Activated B cell treated with CpG ODN at 0.5 μM for 24 hours (primary cell): ENCODE measurements at regions of chrX and their contacts with region 1.

Region 1: DNA sequence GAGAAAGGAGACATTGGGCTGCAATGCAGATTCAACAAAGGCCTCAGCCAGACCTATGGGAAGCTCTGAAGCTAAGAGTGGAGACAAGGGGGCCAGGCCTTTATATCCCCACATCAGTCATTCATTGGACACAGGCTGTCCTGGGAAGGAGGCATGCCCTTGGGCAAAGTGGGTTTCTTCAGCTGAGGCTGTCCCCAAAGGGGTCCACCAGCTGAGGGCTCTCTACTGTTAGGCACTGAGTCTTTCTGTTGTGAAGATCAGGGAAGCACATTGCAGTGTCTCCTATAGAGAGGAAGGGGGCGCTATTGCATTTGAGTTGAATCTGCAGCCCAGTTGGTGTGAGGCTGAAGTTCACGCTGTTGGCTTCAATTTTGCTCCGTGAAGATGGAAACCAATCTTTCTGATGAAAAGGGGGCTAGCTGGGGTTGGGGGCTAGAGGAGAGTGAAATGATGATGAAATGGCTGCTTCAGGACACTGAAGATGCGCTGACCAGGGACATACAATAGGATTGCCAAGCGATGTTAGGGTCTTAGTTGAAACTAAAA is 48.0 kb downstream of the SLC25A5 start:
- DNase-seq: peak; percentile 18
- ATAC-seq: peak; percentile 96
- H3K4me3 Mint-ChIP-seq: no peak overlapping the region
- H3K27ac Mint-ChIP-seq: peak overlapping the region; percentile 26
- H3K4me1 Mint-ChIP-seq: peaks cover 4% of the 10 kb centered on the region
- H3K27me3 Mint-ChIP-seq: no peaks in the 10 kb centered on the region
- CTCF ChIP-seq: no peak

Region 2: DNA sequence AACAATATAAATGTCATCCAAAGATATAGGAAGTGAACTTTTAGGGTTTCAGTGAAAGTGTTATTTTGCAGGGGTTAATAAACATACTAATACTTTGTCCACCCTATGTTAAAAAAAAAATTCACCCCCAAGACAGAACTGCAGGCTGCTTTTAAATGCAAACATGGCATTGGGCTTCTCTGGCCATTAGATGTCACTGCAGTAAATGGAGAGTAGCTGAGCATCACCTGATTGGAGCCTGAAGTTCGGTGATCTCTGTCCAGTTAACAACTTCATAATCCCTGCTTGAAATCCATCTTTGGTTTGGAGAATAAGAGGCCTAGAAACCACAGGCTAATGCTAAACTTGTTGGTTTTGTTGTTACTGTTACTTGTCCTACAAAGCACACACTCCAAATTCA is 98.4 kb before region 1 on chrX:
- CTCF ChIA-PET with region 1: no interaction called
- POLR2A ChIA-PET with region 1: no interaction called
- intact Hi-C with region 1: loop called (anchors 1 kb)
- DNase-seq: no peak
- ATAC-seq: no peak
- H3K4me3 Mint-ChIP-seq: no peak overlapping the region
- H3K27ac Mint-ChIP-seq: no peak overlapping the region
- H3K4me1 Mint-ChIP-seq: no peaks in the 10 kb centered on the region
- H3K27me3 Mint-ChIP-seq: no peaks in the 10 kb centered on the region
- CTCF ChIP-seq: no peak

Region 3: GRCh38 chrX:119549327-119550016 is 33.2 kb after region 1 on chrX:
- CTCF ChIA-PET with region 1: no interaction called
- POLR2A ChIA-PET with region 1: no interaction called
- intact Hi-C with region 1: no loop called
- DNase-seq: no peak
- ATAC-seq: peak; percentile 77
- H3K4me3 Mint-ChIP-seq: peak overlapping the region; percentile 69
- H3K27ac Mint-ChIP-seq: peak overlapping the region; percentile 88
- H3K4me1 Mint-ChIP-seq: peaks cover 34% of the 10 kb centered on the region
- H3K27me3 Mint-ChIP-seq: no peaks in the 10 kb centered on the region
- CTCF ChIP-seq: no peak

Region 4: GRCh38 chrX:119574394-119575266 is 58.4 kb after region 1 on chrX and contains the start of gene UBE2A:
- CTCF ChIA-PET with region 1: interaction called, 6 read pairs
- POLR2A ChIA-PET with region 1: interaction called, 5 read pairs
- intact Hi-C with region 1: loop called (anchors 1 kb)
- DNase-seq: peak; percentile 78
- ATAC-seq: peak; percentile 94
- H3K4me3 Mint-ChIP-seq: peak within 1 kb of the TSS; percentile 93
- H3K27ac Mint-ChIP-seq: peak within 1 kb of the TSS; percentile 91
- H3K4me1 Mint-ChIP-seq: peaks cover 38% of the 10 kb centered on the region
- H3K27me3 Mint-ChIP-seq: no peaks in the 10 kb centered on the region
- CTCF ChIP-seq: no peak
- total RNA-seq, gene UBE2A: 65.9 and 73.5 TPM in 2 replicates

Region 5: DNA sequence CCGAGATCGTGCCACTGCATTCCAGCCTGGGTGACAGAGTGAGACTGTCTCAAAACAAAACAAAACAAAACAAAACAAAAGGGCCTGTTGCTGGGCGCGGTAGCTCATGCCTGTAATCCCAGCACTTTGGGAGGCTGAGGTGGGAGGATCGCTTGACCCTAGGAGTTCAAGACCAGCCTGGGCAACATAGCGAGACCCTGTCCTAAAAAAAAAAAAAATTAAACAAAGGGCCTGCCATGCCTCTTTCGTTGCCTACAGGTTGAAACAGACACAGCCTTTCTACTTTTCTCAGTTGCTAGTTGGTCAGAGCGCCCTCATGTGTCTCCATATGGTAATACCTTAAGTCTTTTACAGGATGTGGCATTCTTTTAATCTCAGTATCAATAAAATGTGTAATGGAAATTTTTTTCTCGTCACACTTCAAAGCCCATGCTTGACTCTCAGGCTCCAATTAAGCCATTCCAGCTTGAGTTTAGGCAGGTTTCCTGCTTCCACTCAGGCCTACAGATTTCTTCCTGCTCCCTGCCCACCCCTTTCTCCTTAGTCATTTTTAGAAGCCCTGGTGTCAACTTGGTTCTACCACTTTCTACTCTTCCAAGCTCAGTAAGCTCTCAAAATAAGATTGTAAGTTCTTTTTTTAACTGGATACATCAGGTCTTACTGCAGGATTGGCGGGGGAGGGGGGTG is 237.5 kb after region 1 on chrX:
- CTCF ChIA-PET with region 1: no interaction called
- POLR2A ChIA-PET with region 1: interaction called, 8 read pairs
- intact Hi-C with region 1: loop called (anchors 1 kb)
- DNase-seq: no peak
- ATAC-seq: peak; percentile 5
- H3K4me3 Mint-ChIP-seq: peak overlapping the region; percentile 50
- H3K27ac Mint-ChIP-seq: peak overlapping the region; percentile 98
- H3K4me1 Mint-ChIP-seq: peaks cover 44% of the 10 kb centered on the region
- H3K27me3 Mint-ChIP-seq: no peaks in the 10 kb centered on the region
- CTCF ChIP-seq: no peak

Region 6: GRCh38 chrX:119880552-119881437 is 364.6 kb after region 1 on chrX:
- CTCF ChIA-PET with region 1: no interaction called
- POLR2A ChIA-PET with region 1: no interaction called
- intact Hi-C with region 1: loop called (anchors 1 kb)
- DNase-seq: no peak
- ATAC-seq: peak; percentile 81
- H3K4me3 Mint-ChIP-seq: no peak overlapping the region
- H3K27ac Mint-ChIP-seq: no peak overlapping the region
- H3K4me1 Mint-ChIP-seq: peaks cover 13% of the 10 kb centered on the region
- H3K27me3 Mint-ChIP-seq: no peaks in the 10 kb centered on the region
- CTCF ChIP-seq: no peak